ENCODE measurements at regions of chr15 and their contacts with region 1.

Region 1: DNA sequence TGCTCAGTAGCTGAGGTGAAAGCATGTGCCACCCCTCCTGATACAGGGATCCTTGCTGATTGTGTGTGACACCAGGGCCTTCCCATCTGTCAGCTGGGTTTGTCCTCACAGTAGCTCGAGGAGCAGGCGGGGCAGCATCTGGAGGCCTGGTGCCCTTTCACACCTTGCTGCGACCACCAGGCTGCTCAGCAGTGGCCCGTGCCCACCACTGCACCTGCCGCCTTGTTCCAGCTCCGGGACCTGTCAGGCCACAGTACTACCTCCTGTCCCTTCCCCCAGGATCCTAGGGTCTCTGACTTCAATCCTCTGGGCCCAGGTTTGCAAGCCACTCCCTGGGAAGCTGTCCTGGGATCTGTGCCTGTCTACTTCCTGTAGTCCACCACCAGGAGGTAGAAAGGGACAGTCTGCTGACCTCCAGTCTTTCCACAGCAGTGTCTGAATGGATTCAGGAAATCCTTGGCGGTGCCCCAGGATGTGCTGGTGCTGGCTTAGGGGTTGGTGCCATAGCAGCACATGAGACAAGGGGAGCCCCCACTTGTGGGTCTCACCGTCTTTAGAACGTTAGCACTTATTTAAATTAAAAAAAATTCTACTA is 27.5 kb downstream of the APBA2 start:
- DNase-seq: peak; percentile 58
- H3K4me3 ChIP-seq: no peak overlapping the region
- H3K27ac ChIP-seq: peak overlapping the region in 1 of 2 experiments; percentile 88; a peak in 2 of 4 replicates
- H3K4me1 ChIP-seq: peaks cover 0 to 52% of the 10 kb centered on the region in 2 experiments; a peak in 2 of 4 replicates
- H3K27me3 ChIP-seq: no peaks in the 10 kb centered on the region
- CTCF ChIP-seq: no peak
- EP300 ChIP-seq: no peak
- RAD21 ChIP-seq: peak; percentile 51

Region 2: DNA sequence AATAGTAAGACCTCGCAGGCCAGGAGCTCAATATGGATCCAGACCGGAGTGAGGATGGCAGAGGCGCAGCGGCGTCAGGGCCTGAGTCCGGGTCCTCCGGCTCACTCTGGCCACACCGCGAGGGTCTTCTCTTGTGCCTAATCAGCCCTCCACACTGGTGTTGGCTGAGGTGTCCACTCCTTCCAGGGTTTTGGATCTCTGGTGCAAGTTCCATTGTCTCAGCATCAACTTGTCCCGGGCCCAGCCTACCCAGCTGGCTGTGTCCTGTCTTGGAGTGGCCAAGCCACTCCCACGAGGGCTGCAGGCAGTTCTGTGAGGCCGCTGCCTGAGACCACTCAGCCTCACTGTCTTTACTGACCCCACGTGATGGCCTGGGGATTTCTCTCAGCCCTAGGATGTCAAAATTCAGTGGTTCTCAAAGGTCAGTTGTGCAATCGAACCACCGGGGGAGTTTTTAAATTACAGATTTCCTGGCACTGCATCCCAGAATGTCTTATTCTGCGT is 52.2 kb before region 1 on chr15:
- CTCF ChIA-PET with region 1: no interaction called
- POLR2A ChIA-PET with region 1: no interaction called
- DNase-seq: no peak
- H3K4me3 ChIP-seq: no peak overlapping the region
- H3K27ac ChIP-seq: no peak overlapping the region
- H3K4me1 ChIP-seq: no peaks in the 10 kb centered on the region
- H3K27me3 ChIP-seq: no peaks in the 10 kb centered on the region
- CTCF ChIP-seq: no peak
- EP300 ChIP-seq: no peak
- RAD21 ChIP-seq: no peak

Region 3: GRCh38 chr15:28885630-28886430 is 27.4 kb before region 1 on chr15 and contains the start of gene APBA2:
- CTCF ChIA-PET with region 1: interaction called, 6 read pairs
- POLR2A ChIA-PET with region 1: interaction called, 33 read pairs
- DNase-seq: peak; percentile 87
- H3K4me3 ChIP-seq: peak within 1 kb of the TSS; percentile 64 to 69
- H3K27ac ChIP-seq: peak within 1 kb of the TSS in 1 of 2 experiments; percentile 75; a peak in 2 of 4 replicates
- H3K4me1 ChIP-seq: peaks cover 0 to 32% of the 10 kb centered on the region in 2 experiments; a peak in 1 of 4 replicates
- H3K27me3 ChIP-seq: no peaks in the 10 kb centered on the region
- CTCF ChIP-seq: no peak
- EP300 ChIP-seq: no peak
- RAD21 ChIP-seq: no peak
- polyA plus RNA-seq, gene APBA2: 12.7 and 14.0 TPM in 2 replicates

Region 4: GRCh38 chr15:28975766-28976179 is 62.5 kb after region 1 on chr15:
- CTCF ChIA-PET with region 1: interaction called, 18 read pairs
- POLR2A ChIA-PET with region 1: no interaction called
- DNase-seq: peak; percentile 77
- H3K4me3 ChIP-seq: no peak overlapping the region; a peak in 1 of 4 replicates
- H3K27ac ChIP-seq: no peak overlapping the region
- H3K4me1 ChIP-seq: peaks cover 5 to 20% of the 10 kb centered on the region in 2 experiments; a peak in 2 of 4 replicates
- H3K27me3 ChIP-seq: no peaks in the 10 kb centered on the region
- CTCF ChIP-seq: peak; percentile 74
- EP300 ChIP-seq: no peak
- RAD21 ChIP-seq: peak; percentile 87

Measured in SK-N-SH (cell line).